A673 (cell line): ENCODE measurements at regions of chr11 and their contacts with region 1.

Region 1: GRCh38 chr11:111841370-111842053 is 29.9 kb downstream of the ALG9 start:
- DNase-seq: peak; percentile 92
- H3K4me3 ChIP-seq: no peak overlapping the region
- H3K27ac ChIP-seq: no peak overlapping the region
- H3K4me1 ChIP-seq: peaks cover 22% of the 10 kb centered on the region
- H3K27me3 ChIP-seq: no peaks in the 10 kb centered on the region
- CTCF ChIP-seq: peak; percentile 98

Region 2: GRCh38 chr11:110896358-110896757 is 945.2 kb before region 1 on chr11:
- CTCF ChIA-PET with region 1: no interaction called
- POLR2A ChIA-PET with region 1: no interaction called
- intact Hi-C with region 1: no loop called
- DNase-seq: peak; percentile 39
- H3K4me3 ChIP-seq: no peak overlapping the region
- H3K27ac ChIP-seq: no peak overlapping the region
- H3K4me1 ChIP-seq: peaks cover 6% of the 10 kb centered on the region
- H3K27me3 ChIP-seq: no peaks in the 10 kb centered on the region
- CTCF ChIP-seq: no peak

Region 3: GRCh38 chr11:111454561-111455192 is 386.8 kb before region 1 on chr11:
- CTCF ChIA-PET with region 1: interaction called, 4 read pairs
- POLR2A ChIA-PET with region 1: no interaction called
- intact Hi-C with region 1: loop called (anchors 5 kb)
- DNase-seq: peak; percentile 85
- H3K4me3 ChIP-seq: no peak overlapping the region
- H3K27ac ChIP-seq: no peak overlapping the region
- H3K4me1 ChIP-seq: peaks cover 10% of the 10 kb centered on the region
- H3K27me3 ChIP-seq: no peaks in the 10 kb centered on the region
- CTCF ChIP-seq: peak; percentile 59

Region 4: DNA sequence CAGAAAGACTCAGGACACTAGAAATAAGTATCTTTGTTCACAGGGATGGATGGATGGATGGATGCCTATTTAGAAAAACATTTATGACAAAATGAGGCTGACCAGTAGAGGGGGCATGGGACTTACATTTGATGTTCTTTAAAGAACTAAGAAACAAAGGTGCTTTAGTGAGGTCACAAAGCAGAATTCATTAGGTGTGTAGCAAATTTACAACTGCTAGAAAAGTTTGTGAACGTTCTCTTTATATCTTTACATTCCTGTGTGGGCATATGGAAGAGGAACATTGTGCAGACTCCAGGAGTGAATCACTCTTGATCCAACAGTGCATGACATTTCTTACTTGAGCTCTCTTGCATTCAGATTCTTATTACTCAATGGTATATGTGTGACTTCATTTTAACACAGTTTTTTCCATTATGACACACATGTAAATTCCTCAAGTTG is 255.1 kb before region 1 on chr11:
- CTCF ChIA-PET with region 1: interaction called, 5 read pairs
- POLR2A ChIA-PET with region 1: no interaction called
- intact Hi-C with region 1: loop called (anchors 5 kb)
- DNase-seq: peak; percentile 74
- H3K4me3 ChIP-seq: no peak overlapping the region
- H3K27ac ChIP-seq: no peak overlapping the region
- H3K4me1 ChIP-seq: no peaks in the 10 kb centered on the region
- H3K27me3 ChIP-seq: no peaks in the 10 kb centered on the region
- CTCF ChIP-seq: peak; percentile 80

Region 5: DNA sequence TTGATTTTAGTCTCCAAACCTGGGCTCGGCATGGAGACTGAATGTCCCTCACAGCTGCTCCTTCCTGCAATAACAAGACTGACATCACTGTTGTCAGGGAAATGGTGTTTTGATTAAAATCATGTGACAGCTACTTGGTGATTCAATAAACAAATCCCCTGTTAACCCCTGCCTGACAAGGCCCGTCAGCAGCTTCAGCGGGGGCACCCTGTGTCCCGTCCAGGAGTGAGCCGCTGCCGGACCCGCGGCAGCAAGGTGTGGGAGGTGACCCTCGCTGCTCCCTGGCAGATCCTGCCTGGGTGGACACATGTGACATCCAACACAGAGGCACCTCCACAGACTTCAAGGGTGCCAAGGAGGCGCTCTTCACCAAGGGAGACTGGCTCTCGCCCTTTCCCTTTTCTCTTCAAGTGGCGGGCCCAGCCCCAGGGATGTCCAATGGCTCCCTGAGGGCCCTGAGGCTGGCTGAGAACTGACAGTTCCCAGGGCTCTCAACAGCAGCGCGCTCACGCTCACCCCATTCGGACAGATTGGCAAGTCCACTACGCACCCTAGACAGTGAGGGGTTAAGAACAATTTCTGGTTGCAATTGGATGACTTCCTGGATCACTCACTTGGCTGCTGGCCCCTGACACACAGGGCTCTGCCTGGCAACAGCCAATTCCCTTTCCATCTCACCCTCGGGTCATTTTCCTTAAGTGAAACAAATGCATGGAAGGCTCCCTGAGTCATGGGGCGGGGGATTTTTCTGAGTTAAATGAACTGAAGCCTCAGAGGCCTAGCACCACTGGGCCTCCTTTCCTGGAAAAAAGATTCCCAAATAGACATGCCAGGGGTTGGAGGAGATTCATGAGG is 106.0 kb before region 1 on chr11:
- CTCF ChIA-PET with region 1: no interaction called
- POLR2A ChIA-PET with region 1: no interaction called
- intact Hi-C with region 1: no loop called
- DNase-seq: peak; percentile 74
- H3K4me3 ChIP-seq: no peak overlapping the region
- H3K27ac ChIP-seq: peak overlapping the region; percentile 64
- H3K4me1 ChIP-seq: peaks cover 14% of the 10 kb centered on the region
- H3K27me3 ChIP-seq: no peaks in the 10 kb centered on the region
- CTCF ChIP-seq: 0 out of 2 replicates have a peak, but pooled peaks have one; percentile 10

Region 6: GRCh38 chr11:111766093-111766833 is 75.2 kb before region 1 on chr11 and contains the start of gene PPP2R1B:
- CTCF ChIA-PET with region 1: interaction called, 3 read pairs
- POLR2A ChIA-PET with region 1: interaction called, 4 read pairs
- intact Hi-C with region 1: loop called (anchors 5 kb)
- DNase-seq: peak; percentile 89
- H3K4me3 ChIP-seq: peak within 1 kb of the TSS; percentile 89
- H3K27ac ChIP-seq: peak within 1 kb of the TSS; percentile 88
- H3K4me1 ChIP-seq: peaks cover 8% of the 10 kb centered on the region
- H3K27me3 ChIP-seq: no peaks in the 10 kb centered on the region
- CTCF ChIP-seq: no peak
- total RNA-seq, gene PPP2R1B: 72.2 and 80.0 TPM in 2 replicates